ENCODE measurements at regions of chr11 and their contacts with region 1.

Region 1: GRCh38 chr11:74170694-74171629 is at the starts of genes C2CD3 and PPME1:
- DNase-seq: peak; percentile 99 to 100
- H3K4me3 ChIP-seq: peak within 1 kb of the TSS; percentile 84
- H3K27ac ChIP-seq: peak within 1 kb of the TSS; percentile 73
- H3K4me1 ChIP-seq: peaks cover 40% of the 10 kb centered on the region
- H3K27me3 ChIP-seq: no peaks in the 10 kb centered on the region
- CTCF ChIP-seq: no peak; the same call in 1 of the 2 replicates
- total RNA-seq, gene C2CD3: 47.6 and 50.0 TPM in 2 replicates
- total RNA-seq, gene PPME1: 81.0 and 86.8 TPM in 2 replicates

Region 2: DNA sequence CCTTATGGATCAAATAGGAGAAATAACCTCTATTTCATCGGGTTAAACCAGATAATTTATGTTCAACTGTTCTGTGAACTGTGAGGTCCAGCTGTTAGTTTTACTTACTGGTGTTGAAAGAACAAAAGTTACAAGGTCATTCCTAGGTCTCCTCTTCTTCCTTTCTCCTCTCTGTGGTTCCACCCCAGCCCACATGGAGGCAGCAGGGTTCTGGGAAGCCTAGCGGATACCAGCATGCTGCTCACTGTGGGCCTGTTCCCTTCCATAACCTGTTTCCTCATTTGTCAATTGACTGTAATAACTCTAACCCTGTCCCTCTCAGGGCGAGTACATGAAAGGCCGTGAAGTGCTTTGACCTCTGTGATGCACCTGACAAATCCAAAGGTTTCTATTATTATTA is 766.9 kb before region 1 on chr11:
- CTCF ChIA-PET with region 1: no interaction called
- POLR2A ChIA-PET with region 1: no interaction called
- intact Hi-C with region 1: no loop called
- DNase-seq: peak in 1 of 2 experiments; percentile 47
- H3K4me3 ChIP-seq: no peak overlapping the region
- H3K27ac ChIP-seq: no peak overlapping the region
- H3K4me1 ChIP-seq: no peaks in the 10 kb centered on the region
- H3K27me3 ChIP-seq: no peaks in the 10 kb centered on the region
- CTCF ChIP-seq: peak; percentile 58

Region 3: GRCh38 chr11:73965076-73965860 is 205.7 kb before region 1 on chr11:
- CTCF ChIA-PET with region 1: interaction called, 3 read pairs
- POLR2A ChIA-PET with region 1: no interaction called
- intact Hi-C with region 1: loop called (anchors 2 kb)
- DNase-seq: no peak
- H3K4me3 ChIP-seq: no peak overlapping the region
- H3K27ac ChIP-seq: no peak overlapping the region
- H3K4me1 ChIP-seq: no peaks in the 10 kb centered on the region
- H3K27me3 ChIP-seq: no peaks in the 10 kb centered on the region
- CTCF ChIP-seq: no peak

Region 4: DNA sequence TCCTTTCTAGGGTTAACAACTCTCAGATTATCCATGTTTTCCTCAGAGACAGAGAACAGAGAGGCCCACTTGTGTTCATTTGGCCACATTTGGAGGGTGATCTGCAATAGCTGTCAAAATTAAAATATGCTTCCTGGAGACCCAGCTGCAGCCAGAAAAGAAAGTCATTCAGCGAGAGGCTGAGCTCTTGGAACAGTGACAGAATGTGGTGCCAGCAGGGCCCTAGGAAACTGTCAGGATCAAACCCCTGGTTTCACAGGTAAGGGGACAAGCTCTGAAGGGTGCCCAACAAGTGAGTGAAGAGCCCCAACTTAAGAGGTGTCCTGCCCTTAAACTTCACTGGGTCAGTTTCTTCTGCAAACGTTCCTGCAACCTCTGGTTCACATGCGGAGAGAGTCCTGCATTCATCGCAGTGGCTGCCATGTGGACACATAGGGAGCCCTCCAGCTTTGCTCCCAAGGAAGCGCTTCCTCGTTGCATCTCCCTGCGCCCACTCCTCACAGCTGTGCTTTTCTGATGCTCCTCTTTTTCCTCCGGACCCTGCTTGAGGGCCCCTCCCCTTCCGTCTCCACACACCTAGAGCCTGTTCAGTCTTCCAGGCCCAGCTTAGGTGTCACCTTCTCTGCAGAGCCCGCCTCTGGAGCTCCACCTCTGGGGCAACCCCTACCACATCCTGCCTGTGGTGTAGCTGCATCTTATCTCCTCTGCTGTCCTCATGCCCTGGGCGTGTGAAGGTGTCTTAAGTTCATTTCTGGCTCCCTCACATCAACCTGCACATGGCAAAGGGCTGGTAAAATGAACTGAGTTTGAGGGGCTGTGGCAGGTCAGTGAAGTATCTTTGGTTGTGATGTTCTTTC is 166.0 kb before region 1 on chr11:
- CTCF ChIA-PET with region 1: no interaction called
- POLR2A ChIA-PET with region 1: no interaction called
- intact Hi-C with region 1: no loop called
- DNase-seq: no peak
- H3K4me3 ChIP-seq: no peak overlapping the region
- H3K27ac ChIP-seq: no peak overlapping the region
- H3K4me1 ChIP-seq: no peaks in the 10 kb centered on the region
- H3K27me3 ChIP-seq: no peaks in the 10 kb centered on the region
- CTCF ChIP-seq: no peak

Region 5: DNA sequence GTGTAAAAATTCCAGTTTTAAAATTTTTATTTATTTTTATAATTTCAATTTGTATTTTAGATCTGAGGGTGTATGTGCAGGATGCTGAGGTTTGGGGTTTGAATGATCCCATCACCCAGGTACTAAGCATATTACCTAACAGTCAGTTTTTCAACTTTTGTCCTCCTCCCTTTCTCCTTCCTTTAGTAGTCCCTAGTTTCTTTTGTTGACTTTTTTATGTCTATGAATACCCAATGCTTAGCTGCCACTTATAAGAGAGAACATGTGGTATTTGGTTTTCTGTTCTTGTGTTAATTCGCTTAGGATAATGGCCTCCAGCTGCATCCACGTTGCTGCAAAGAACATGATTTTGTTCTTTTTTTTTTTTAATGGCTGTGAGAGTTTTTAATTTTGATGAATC is 126.4 kb before region 1 on chr11:
- CTCF ChIA-PET with region 1: no interaction called
- POLR2A ChIA-PET with region 1: interaction called, 11 read pairs
- intact Hi-C with region 1: no loop called
- DNase-seq: no peak
- H3K4me3 ChIP-seq: no peak overlapping the region
- H3K27ac ChIP-seq: no peak overlapping the region
- H3K4me1 ChIP-seq: no peaks in the 10 kb centered on the region
- H3K27me3 ChIP-seq: no peaks in the 10 kb centered on the region
- CTCF ChIP-seq: no peak

Region 6: GRCh38 chr11:74084796-74085541 is 86.0 kb before region 1 on chr11:
- CTCF ChIA-PET with region 1: no interaction called
- POLR2A ChIA-PET with region 1: interaction called, 15 read pairs
- intact Hi-C with region 1: no loop called
- DNase-seq: peak; percentile 3 to 85
- H3K4me3 ChIP-seq: no peak overlapping the region
- H3K27ac ChIP-seq: peak overlapping the region; percentile 57
- H3K4me1 ChIP-seq: peaks cover 19% of the 10 kb centered on the region
- H3K27me3 ChIP-seq: no peaks in the 10 kb centered on the region
- CTCF ChIP-seq: no peak

Region 7: GRCh38 chr11:74311352-74311926 is 140.5 kb after region 1 on chr11 and contains the start of gene P4HA3:
- CTCF ChIA-PET with region 1: no interaction called
- POLR2A ChIA-PET with region 1: interaction called, 27 read pairs
- intact Hi-C with region 1: no loop called
- DNase-seq: peak in 1 of 2 experiments; percentile 52
- H3K4me3 ChIP-seq: no peak within 1 kb of the TSS; the same call in 1 of the 2 replicates
- H3K27ac ChIP-seq: no peak within 1 kb of the TSS
- H3K4me1 ChIP-seq: no peaks in the 10 kb centered on the region
- H3K27me3 ChIP-seq: no peaks in the 10 kb centered on the region; the same call in 1 of the 2 replicates
- CTCF ChIP-seq: no peak
- total RNA-seq, gene P4HA3: 0.22 and 0.60 TPM in 2 replicates

Measured in PC-9 (cell line).